Cardiac septum (tissue), 1 donor: ENCODE measurements at regions of chr13 and their contacts with region 1.

Region 1: GRCh38 chr13:57857945-57858344 is 226.4 kb downstream of the PCDH17 start:
- DNase-seq: no peak

Region 2: GRCh38 chr13:56988543-56988942 is 869.4 kb before region 1 on chr13:
- intact Hi-C with region 1: no loop called
- DNase-seq: no peak

Region 3: DNA sequence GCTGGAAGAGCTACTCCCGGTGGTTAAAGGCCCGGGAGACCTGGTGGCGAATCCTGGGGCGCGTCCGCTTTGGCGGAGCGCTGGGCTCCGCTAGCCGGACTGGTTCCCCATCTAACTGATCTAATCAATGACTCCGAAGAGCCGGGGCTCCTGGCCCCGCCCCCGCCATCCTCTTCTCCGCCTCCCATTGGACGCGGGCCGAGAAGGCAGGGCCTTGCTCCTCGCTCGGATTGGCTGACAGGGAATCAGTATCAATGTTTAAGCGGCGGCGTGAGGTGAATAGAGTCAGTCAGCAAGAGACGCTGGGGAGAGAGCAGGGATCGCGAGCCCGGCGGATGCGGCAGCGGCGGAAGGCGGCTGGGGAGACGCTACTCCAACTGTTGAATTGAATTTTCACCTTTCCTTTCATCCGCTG is 228.1 kb before region 1 on chr13:
- intact Hi-C with region 1: loop called (anchors 5 kb)
- DNase-seq: peak; percentile 91

Region 4: DNA sequence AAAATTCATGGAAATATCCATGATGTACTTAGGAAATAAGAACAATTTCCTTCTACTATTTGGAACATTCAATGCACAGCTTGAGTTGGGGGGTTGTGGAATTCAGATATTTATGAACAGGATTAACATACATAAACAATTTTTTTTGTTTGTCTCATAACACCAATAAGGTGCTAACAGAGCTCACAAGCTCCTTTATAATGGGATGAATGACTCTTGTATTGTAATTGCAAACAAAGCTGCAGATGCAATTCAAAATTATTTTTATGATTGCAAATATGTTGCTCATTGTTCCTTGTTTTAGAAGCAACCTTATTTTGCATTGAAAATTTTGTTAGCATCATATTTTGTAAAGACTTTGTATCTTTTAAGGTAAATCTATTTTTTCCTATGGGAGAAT is 39.3 kb after region 1 on chr13:
- intact Hi-C with region 1: no loop called
- DNase-seq: no peak